Activated CD4-positive, alpha-beta T cell treated with anti-CD3 and anti-CD28 coated beads for 36 hours (primary cell): ENCODE measurements at regions of chr10 and their contacts with region 1.

Region 1: GRCh38 chr10:104925232-104925851 is 284.3 kb downstream of the SORCS3 start:
- DNase-seq: peak; percentile 58
- ATAC-seq: no peak
- H3K4me3 Mint-ChIP-seq: no peak overlapping the region
- H3K27ac Mint-ChIP-seq: no peak overlapping the region
- H3K4me1 Mint-ChIP-seq: no peaks in the 10 kb centered on the region
- H3K27me3 Mint-ChIP-seq: no peaks in the 10 kb centered on the region

Region 2: GRCh38 chr10:104406715-104407650 is 518.4 kb before region 1 on chr10:
- CTCF ChIA-PET with region 1: no interaction called
- POLR2A ChIA-PET with region 1: no interaction called
- intact Hi-C with region 1: loop called in 1 of 2 experiments (anchors 10 kb)
- DNase-seq: no peak
- ATAC-seq: no peak
- H3K4me3 Mint-ChIP-seq: no peak overlapping the region
- H3K27ac Mint-ChIP-seq: no peak overlapping the region
- H3K4me1 Mint-ChIP-seq: no peaks in the 10 kb centered on the region
- H3K27me3 Mint-ChIP-seq: peaks cover 14% of the 10 kb centered on the region

Region 3: GRCh38 chr10:104642658-104643302 is 282.6 kb before region 1 on chr10:
- CTCF ChIA-PET with region 1: no interaction called
- POLR2A ChIA-PET with region 1: no interaction called
- intact Hi-C with region 1: loop called in 1 of 2 experiments (anchors 2 kb)
- DNase-seq: peak; percentile 76
- ATAC-seq: peak; percentile 73
- H3K4me3 Mint-ChIP-seq: no peak overlapping the region
- H3K27ac Mint-ChIP-seq: no peak overlapping the region
- H3K4me1 Mint-ChIP-seq: peaks cover 5% of the 10 kb centered on the region
- H3K27me3 Mint-ChIP-seq: peaks cover 66% of the 10 kb centered on the region

Region 4: GRCh38 chr10:104802941-104803340 is 122.4 kb before region 1 on chr10:
- CTCF ChIA-PET with region 1: no interaction called
- POLR2A ChIA-PET with region 1: no interaction called
- intact Hi-C with region 1: loop called in 1 of 2 experiments (anchors 5 kb)
- DNase-seq: no peak
- ATAC-seq: no peak
- H3K4me3 Mint-ChIP-seq: no peak overlapping the region
- H3K27ac Mint-ChIP-seq: no peak overlapping the region
- H3K4me1 Mint-ChIP-seq: no peaks in the 10 kb centered on the region
- H3K27me3 Mint-ChIP-seq: no peaks in the 10 kb centered on the region